ENCODE measurements at regions of chr2 and their contacts with region 1.

Region 1: DNA sequence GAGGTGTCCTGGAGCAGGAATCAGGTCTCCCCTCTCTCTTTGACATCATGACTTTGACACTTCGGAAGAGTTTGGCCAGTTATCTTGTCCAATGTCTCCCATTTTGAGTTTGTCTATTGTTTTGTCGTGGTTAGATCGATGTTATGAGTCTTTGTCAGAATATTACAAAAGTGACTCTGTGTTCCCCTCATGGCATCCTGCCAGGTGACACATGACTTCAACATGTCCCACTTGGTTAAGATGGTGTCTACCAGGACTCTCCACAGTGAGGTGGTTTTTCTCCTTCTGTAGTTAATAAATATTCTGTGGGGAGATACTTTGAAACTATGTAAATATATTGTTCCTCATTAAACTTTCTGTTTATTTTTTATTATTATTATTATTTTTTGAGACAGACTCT is 76.6 kb upstream of the BZW1 start:
- DNase-seq: no peak
- ATAC-seq: no peak
- H3K4me3 ChIP-seq: no peak overlapping the region
- H3K27ac ChIP-seq: no peak overlapping the region
- H3K4me1 ChIP-seq: peaks cover 2% of the 10 kb centered on the region
- H3K27me3 ChIP-seq: peaks cover 0 to 7% of the 10 kb centered on the region in 2 experiments; a peak in 1 of 5 replicates
- CTCF ChIP-seq: no peak
- EP300 ChIP-seq: no peak
- POLR2A ChIP-seq: no peak
- RAD21 ChIP-seq: no peak

Region 2: GRCh38 chr2:199979832-199980628 is 755.0 kb before region 1 on chr2:
- CTCF ChIA-PET with region 1: no interaction called
- POLR2A ChIA-PET with region 1: no interaction called
- in situ Hi-C with region 1: no loop called
- intact Hi-C with region 1: loop called (anchors 10 kb)
- DNase-seq: peak; percentile 67
- ATAC-seq: peak; percentile 87
- H3K4me3 ChIP-seq: peak overlapping the region; percentile 33 to 36 (median 34); a peak in 3 of 6 replicates
- H3K27ac ChIP-seq: no peak overlapping the region
- H3K4me1 ChIP-seq: peaks cover 29% of the 10 kb centered on the region
- H3K27me3 ChIP-seq: no peaks in the 10 kb centered on the region
- CTCF ChIP-seq: peak; percentile 91
- EP300 ChIP-seq: no peak
- POLR2A ChIP-seq: no peak
- RAD21 ChIP-seq: peak; percentile 83

Region 3: GRCh38 chr2:200483729-200484198 is 251.3 kb before region 1 on chr2:
- CTCF ChIA-PET with region 1: interaction called, 6 read pairs
- POLR2A ChIA-PET with region 1: no interaction called
- in situ Hi-C with region 1: no loop called
- intact Hi-C with region 1: loop called (anchors 10 kb)
- DNase-seq: peak; percentile 64
- ATAC-seq: peak; percentile 86
- H3K4me3 ChIP-seq: no peak overlapping the region
- H3K27ac ChIP-seq: no peak overlapping the region
- H3K4me1 ChIP-seq: peaks cover 68% of the 10 kb centered on the region
- H3K27me3 ChIP-seq: no peaks in the 10 kb centered on the region
- CTCF ChIP-seq: peak; percentile 90
- EP300 ChIP-seq: 0 out of 4 replicates have a peak, but pooled peaks of 1 of the 2 experiments have one; percentile 30
- POLR2A ChIP-seq: peak in 1 of 2 experiments; percentile 45; a peak in 2 of 4 replicates
- RAD21 ChIP-seq: peak; percentile 62

Region 4: GRCh38 chr2:200578778-200579177 is 156.3 kb before region 1 on chr2:
- CTCF ChIA-PET with region 1: interaction called, 11 read pairs
- POLR2A ChIA-PET with region 1: no interaction called
- in situ Hi-C with region 1: no loop called
- intact Hi-C with region 1: loop called (anchors 1 kb)
- DNase-seq: peak; percentile 83
- ATAC-seq: peak; percentile 100
- H3K4me3 ChIP-seq: no peak overlapping the region
- H3K27ac ChIP-seq: no peak overlapping the region
- H3K4me1 ChIP-seq: peaks cover 8% of the 10 kb centered on the region
- H3K27me3 ChIP-seq: no peaks in the 10 kb centered on the region
- CTCF ChIP-seq: peak; percentile 88
- EP300 ChIP-seq: peak in 1 of 2 experiments; percentile 44; a peak in 1 of 4 replicates
- POLR2A ChIP-seq: no peak
- RAD21 ChIP-seq: peak; percentile 84

Region 5: DNA sequence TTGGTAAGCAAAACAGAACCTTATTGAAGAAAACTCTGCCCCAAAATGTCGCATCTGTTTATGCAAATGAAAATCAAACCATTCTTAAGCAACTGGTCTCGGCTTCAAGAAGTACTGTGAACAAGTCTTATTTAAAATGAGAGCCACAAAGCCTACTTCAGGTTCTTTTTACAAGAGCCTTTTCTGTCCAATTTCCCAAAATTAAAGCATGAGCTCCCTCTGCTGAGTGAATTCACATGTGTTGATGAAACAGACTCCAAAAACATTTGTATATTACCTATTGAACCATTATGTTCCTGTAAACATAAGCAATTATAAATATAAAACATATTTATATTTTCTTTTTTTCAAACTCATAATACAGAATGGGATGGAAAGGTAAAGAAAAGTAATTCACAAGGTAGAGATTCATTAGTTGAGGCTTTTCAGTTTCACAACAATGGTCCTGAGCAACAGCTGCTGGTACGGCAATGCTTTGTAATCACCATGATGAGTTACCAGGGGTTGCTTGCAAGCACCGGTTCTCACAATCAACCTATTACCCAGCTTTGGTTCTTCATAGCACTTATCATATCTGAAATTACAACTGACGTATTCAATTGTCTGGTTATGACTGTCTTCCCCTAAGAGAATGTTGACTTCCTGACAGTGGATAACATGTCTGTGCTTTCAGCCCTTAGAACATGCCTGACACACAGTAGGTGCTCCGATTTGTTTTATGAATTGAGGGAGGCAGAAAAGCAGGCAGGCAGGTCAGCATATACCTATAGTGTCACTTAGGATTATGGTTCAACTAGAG is 31.7 kb before region 1 on chr2:
- CTCF ChIA-PET with region 1: interaction called, 15 read pairs
- POLR2A ChIA-PET with region 1: no interaction called
- in situ Hi-C with region 1: loop called (anchors 5 kb)
- intact Hi-C with region 1: loop called (anchors 5 kb)
- DNase-seq: peak; percentile 77
- ATAC-seq: peak; percentile 64
- H3K4me3 ChIP-seq: no peak overlapping the region; a peak in 1 of 6 replicates
- H3K27ac ChIP-seq: peak overlapping the region; percentile 53
- H3K4me1 ChIP-seq: peaks cover 27% of the 10 kb centered on the region
- H3K27me3 ChIP-seq: no peaks in the 10 kb centered on the region
- CTCF ChIP-seq: peak; percentile 70
- EP300 ChIP-seq: no peak
- POLR2A ChIP-seq: no peak
- RAD21 ChIP-seq: peak; percentile 73

Region 6: DNA sequence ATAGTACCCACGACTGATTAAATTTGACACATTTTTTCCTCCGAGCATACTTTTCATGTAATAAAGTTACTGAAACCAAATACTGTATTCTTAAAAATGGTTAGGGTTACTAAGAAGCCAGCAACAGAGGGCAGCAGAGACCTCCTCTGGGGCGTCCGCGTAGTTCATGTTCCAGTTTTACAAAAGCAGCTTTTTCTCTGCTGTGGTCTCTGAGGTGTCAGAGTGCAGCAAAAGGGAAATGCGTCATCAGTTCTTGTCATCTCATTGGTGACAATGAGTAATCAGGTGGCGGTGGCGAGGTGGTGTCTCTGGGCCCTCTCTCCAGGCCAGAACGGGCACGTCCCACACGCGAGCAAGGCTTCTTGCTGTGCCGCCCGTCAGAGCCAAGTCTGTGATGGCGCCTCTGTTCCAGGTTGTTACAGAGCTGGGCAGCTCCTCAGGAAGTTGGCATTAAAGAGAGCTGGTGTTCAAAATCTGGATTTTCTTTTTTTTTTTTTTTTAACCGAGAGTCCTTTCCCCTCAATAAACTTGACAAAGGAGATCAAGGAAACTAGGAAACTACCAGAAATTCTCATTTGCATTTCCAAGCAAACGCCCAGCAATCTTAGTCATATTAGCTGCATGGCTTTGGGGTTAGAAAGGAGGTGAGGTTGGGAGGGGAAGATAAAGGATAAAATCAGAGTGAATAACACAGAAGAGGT is 21.9 kb before region 1 on chr2:
- CTCF ChIA-PET with region 1: interaction called, 10 read pairs
- POLR2A ChIA-PET with region 1: interaction called, 16 read pairs
- in situ Hi-C with region 1: loop called (anchors 5 kb)
- intact Hi-C with region 1: loop called (anchors 1 kb)
- DNase-seq: peak; percentile 96
- ATAC-seq: peak; percentile 94
- H3K4me3 ChIP-seq: peak overlapping the region; percentile 35 to 65 (median 50); a peak in 5 of 6 replicates
- H3K27ac ChIP-seq: peak overlapping the region; percentile 41
- H3K4me1 ChIP-seq: peaks cover 20% of the 10 kb centered on the region
- H3K27me3 ChIP-seq: no peaks in the 10 kb centered on the region; a peak in 1 of 5 replicates
- CTCF ChIP-seq: peak; percentile 94
- EP300 ChIP-seq: peak in 1 of 2 experiments; percentile 47; a peak in 1 of 4 replicates
- POLR2A ChIP-seq: peak; percentile 74 to 92
- RAD21 ChIP-seq: peak; percentile 93

Region 7: GRCh38 chr2:200756618-200757321 is 21.7 kb after region 1 on chr2:
- CTCF ChIA-PET with region 1: no interaction called
- POLR2A ChIA-PET with region 1: interaction called, 53 read pairs
- in situ Hi-C with region 1: no loop called
- intact Hi-C with region 1: loop called (anchors 2 kb)
- DNase-seq: peak; percentile 95
- ATAC-seq: peak; percentile 93
- H3K4me3 ChIP-seq: peak overlapping the region; percentile 5 to 59 (median 11); a peak in 5 of 6 replicates
- H3K27ac ChIP-seq: peak overlapping the region; percentile 64
- H3K4me1 ChIP-seq: peaks cover 79% of the 10 kb centered on the region
- H3K27me3 ChIP-seq: no peaks in the 10 kb centered on the region; a peak in 2 of 5 replicates
- CTCF ChIP-seq: no peak
- EP300 ChIP-seq: peak; percentile 33 to 91; a peak in 2 of 4 replicates
- POLR2A ChIP-seq: peak; percentile 37 to 50; a peak in 2 of 4 replicates
- RAD21 ChIP-seq: peak; percentile 22; the same call in 1 of the 2 replicates

Measured in HepG2 (cell line).